GM13976 (cell line): ENCODE measurements at regions of chr5 and their contacts with region 1.

Region 1: DNA sequence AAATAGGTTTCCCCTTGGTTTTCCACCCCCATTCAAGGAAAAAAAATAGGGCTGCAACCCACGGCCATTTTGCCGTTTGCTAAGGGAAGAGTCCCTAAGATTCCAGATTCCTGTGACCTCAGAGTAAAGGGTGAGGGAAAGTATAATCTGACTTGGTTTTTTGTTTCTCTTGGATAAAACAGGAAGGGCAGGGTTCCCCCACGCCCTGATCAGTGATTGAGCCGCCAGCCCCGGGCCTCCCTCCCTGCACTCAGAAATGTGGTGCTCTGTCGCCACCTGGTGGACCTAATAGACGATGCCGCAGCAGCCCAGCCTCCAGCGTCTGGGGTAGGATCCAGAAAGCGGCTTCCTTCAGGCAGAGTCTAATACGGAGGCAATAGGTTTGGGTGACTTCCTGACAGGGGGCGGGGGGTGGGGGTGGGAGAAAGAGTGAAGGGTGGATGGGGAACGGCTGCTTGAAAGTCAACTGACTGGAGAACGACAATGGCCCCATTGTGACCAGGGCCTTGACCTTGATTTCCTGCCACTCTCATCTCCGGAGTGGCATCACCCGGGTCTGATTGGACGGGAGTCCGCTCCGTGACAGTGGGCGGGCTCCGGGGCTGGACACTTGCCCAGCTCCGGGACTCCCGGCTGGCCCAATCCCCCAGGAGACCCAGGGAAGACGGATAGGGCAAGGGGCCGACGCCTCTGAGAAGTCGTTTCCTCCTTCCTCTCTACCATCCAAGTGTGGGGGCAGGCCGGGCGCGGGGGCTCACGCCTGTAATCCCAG is 17.8 kb upstream of the CYSTM1 start:
- DNase-seq: peak; percentile 92
- CTCF ChIP-seq: peak; percentile 96

Region 2: DNA sequence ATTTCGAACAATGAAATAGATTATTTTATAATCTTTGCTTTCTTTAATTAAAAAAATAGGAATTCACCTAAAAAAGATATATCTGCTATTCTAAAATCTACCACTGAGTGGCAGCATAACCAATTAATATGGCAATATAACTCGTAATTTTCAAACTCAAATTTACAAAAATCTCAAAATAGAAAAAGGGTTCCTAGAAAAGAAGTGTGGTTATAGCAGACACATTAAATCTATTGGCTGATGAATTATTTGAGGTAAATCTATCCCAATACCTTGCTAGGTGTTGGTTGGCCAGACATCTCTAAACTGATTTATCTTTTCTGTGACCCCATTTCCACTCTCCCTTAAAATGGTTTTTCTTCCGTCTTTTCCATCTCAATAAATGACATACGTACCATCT is 83.9 kb before region 1 on chr5:
- in situ Hi-C with region 1: loop called (anchors 5 kb)
- DNase-seq: peak; percentile 45
- CTCF ChIP-seq: peak; percentile 55

Region 3: GRCh38 chr5:140611020-140611521 is 453.9 kb after region 1 on chr5:
- in situ Hi-C with region 1: no loop called
- DNase-seq: no peak
- CTCF ChIP-seq: no peak

Region 4: GRCh38 chr5:140800816-140801493 is 643.7 kb after region 1 on chr5 and contains the start of gene PCDHA3:
- in situ Hi-C with region 1: no loop called
- DNase-seq: no peak
- CTCF ChIP-seq: no peak